Caco-2 (cell line): ENCODE measurements at regions of chr7 and their contacts with region 1.

Region 1: DNA sequence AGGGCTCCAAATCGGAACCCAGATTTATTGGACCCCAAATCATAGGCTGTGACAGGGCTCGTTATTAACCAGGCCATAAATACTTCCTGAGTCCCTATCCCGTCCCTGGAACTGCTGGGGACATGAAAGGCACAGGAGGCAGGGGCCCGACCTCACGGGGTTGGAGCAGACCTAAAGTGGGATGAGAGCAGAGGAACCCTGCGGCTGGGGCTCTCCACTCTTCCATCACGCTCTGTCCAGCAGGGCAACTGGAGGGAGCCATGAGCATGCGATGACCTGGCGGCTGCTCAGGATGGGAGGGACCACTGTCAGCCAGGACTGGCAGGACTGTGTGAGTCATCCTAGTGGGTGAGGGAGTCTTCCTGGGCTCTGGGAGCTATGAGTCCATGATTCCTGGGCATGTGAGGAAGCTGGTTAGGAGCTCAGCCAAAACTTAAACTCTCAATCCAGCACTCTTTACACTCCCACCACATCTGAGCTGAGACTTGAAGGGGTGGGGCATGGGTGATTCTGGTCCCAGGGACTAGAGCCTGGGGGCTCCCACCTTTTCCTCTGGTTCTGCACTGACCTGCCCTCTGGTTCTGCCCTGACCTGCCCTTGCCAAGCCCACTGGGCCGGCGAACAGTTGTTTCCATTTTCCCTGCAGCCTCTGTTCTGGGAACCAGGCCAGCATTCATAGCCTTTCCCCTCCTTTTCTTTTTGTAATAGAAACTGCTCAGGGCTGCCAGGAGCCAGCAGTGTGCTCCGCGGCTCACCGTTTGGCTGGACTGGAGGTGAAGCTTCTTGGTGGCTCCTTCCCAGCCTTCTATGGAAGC is 47.1 kb downstream of the SYPL1 start:
- DNase-seq: peak; percentile 32 to 65
- H3K4me3 ChIP-seq: no peak overlapping the region
- H3K4me3 Mint-ChIP-seq: peak overlapping the region; percentile 66
- H3K27ac Mint-ChIP-seq: peak overlapping the region; percentile 30
- H3K4me1 ChIP-seq: peaks cover 20% of the 10 kb centered on the region
- H3K4me1 Mint-ChIP-seq: no peaks in the 10 kb centered on the region
- H3K27me3 ChIP-seq: no peaks in the 10 kb centered on the region
- H3K27me3 Mint-ChIP-seq: no peaks in the 10 kb centered on the region
- CTCF ChIP-seq: no peak

Region 2: GRCh38 chr7:105838627-105839231 is 226.2 kb before region 1 on chr7:
- CTCF ChIA-PET with region 1: no interaction called
- POLR2A ChIA-PET with region 1: no interaction called
- intact Hi-C with region 1: no loop called
- DNase-seq: no peak
- H3K4me3 ChIP-seq: no peak overlapping the region
- H3K4me3 Mint-ChIP-seq: no peak overlapping the region
- H3K27ac Mint-ChIP-seq: no peak overlapping the region
- H3K4me1 ChIP-seq: no peaks in the 10 kb centered on the region
- H3K4me1 Mint-ChIP-seq: no peaks in the 10 kb centered on the region
- H3K27me3 ChIP-seq: no peaks in the 10 kb centered on the region
- H3K27me3 Mint-ChIP-seq: no peaks in the 10 kb centered on the region
- CTCF ChIP-seq: no peak

Region 3: GRCh38 chr7:106075937-106076336 is 11.0 kb after region 1 on chr7:
- CTCF ChIA-PET with region 1: no interaction called
- POLR2A ChIA-PET with region 1: no interaction called
- intact Hi-C with region 1: no loop called
- DNase-seq: no peak
- H3K4me3 ChIP-seq: no peak overlapping the region
- H3K4me3 Mint-ChIP-seq: no peak overlapping the region
- H3K27ac Mint-ChIP-seq: no peak overlapping the region
- H3K4me1 ChIP-seq: peaks cover 34% of the 10 kb centered on the region
- H3K4me1 Mint-ChIP-seq: peaks cover 28% of the 10 kb centered on the region
- H3K27me3 ChIP-seq: no peaks in the 10 kb centered on the region
- H3K27me3 Mint-ChIP-seq: no peaks in the 10 kb centered on the region
- CTCF ChIP-seq: no peak

Region 4: GRCh38 chr7:106112117-106112971 is 47.4 kb after region 1 on chr7 and contains the start of gene SYPL1:
- CTCF ChIA-PET with region 1: no interaction called
- POLR2A ChIA-PET with region 1: interaction called, 4 read pairs
- intact Hi-C with region 1: loop called (anchors 2 kb)
- DNase-seq: peak; percentile 96
- H3K4me3 ChIP-seq: peak within 1 kb of the TSS; percentile 59
- H3K4me3 Mint-ChIP-seq: peak within 1 kb of the TSS; percentile 90
- H3K27ac Mint-ChIP-seq: peak within 1 kb of the TSS; percentile 88
- H3K4me1 ChIP-seq: peaks cover 25% of the 10 kb centered on the region
- H3K4me1 Mint-ChIP-seq: peaks cover 18% of the 10 kb centered on the region
- H3K27me3 ChIP-seq: no peaks in the 10 kb centered on the region
- H3K27me3 Mint-ChIP-seq: no peaks in the 10 kb centered on the region
- CTCF ChIP-seq: peak in 1 of 2 experiments; percentile 19
- total RNA-seq, gene SYPL1: 78.7 and 81.0 TPM in 2 replicates